PC-9 (cell line): ENCODE measurements at regions of chr17 and their contacts with region 1.

Region 1: DNA sequence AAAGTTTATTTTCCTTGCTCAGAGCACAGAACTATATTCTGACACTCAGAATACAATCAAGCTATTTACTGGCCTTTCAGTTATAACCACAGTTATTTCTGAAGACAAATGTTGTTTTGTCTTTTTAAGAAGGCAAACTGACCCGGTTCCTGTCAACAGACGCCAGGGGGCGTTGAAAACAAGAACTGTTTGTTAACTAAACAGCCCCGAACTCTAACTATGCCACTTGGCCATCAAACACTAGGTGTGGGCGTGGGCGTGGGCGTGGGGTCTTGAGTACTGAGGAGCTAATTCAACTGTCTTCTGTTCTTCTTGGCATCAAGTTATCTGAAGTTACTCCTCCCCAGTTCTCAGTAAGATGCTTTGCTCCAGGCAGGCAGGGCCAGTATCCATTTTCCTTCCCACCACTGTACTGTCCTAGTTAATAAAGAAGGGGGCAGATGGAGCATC is 63.2 kb upstream of the MTMR4 start:
- DNase-seq: peak; percentile 24 to 44
- H3K4me3 ChIP-seq: no peak overlapping the region
- H3K27ac ChIP-seq: no peak overlapping the region
- H3K4me1 ChIP-seq: peaks cover 15% of the 10 kb centered on the region
- H3K27me3 ChIP-seq: no peaks in the 10 kb centered on the region
- CTCF ChIP-seq: peak; percentile 83

Region 2: DNA sequence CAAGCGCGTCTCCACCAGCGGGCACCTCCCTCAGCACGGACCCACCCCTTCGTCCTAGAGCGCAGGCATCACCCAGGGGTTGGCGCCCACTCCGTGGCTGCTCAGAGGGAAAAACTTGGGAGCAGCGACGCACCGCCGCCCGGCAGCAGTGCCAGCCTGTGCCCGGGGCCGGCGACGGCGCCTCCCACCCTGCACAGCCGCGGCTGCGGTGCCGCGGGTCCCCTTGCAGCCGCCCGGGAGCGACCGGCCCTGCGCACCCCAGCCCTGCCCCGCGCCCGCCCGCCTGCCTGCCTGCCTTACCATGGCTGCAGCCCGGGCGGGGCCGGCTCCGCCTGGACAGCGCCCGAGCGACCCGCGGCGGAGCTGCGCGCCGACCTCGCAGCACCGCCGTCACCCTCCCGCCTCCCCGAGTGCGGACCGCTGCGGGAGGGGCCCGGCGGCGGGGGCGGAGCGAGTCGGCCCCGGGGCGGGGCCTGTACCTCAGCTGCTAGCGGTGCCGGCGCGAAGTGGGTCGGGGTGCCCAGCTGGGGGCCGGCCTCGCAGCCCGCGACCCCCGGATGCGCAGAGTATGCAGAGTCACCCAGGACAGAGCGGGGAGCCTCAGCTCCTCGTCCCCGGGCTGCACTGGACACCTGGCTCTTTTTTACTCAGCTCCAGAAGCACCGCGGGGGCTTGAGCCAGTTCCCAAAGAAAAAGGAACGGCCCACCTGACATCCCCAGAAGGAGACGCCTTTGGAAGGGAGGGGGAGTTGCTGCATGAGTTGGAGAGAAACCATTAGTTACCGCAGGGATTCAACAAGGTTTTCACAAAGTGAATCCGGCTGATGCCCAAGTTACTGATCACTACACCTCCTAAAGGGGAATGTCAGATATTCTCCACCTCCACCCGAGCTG is 45.8 kb before region 1 on chr17:
- CTCF ChIA-PET with region 1: no interaction called
- POLR2A ChIA-PET with region 1: no interaction called
- intact Hi-C with region 1: no loop called
- DNase-seq: peak in 1 of 2 experiments; percentile 55
- H3K4me3 ChIP-seq: peak overlapping the region; percentile 42; the same call in 1 of the 2 replicates
- H3K27ac ChIP-seq: no peak overlapping the region
- H3K4me1 ChIP-seq: peaks cover 15% of the 10 kb centered on the region
- H3K27me3 ChIP-seq: peaks cover 21% of the 10 kb centered on the region
- CTCF ChIP-seq: no peak

Region 3: DNA sequence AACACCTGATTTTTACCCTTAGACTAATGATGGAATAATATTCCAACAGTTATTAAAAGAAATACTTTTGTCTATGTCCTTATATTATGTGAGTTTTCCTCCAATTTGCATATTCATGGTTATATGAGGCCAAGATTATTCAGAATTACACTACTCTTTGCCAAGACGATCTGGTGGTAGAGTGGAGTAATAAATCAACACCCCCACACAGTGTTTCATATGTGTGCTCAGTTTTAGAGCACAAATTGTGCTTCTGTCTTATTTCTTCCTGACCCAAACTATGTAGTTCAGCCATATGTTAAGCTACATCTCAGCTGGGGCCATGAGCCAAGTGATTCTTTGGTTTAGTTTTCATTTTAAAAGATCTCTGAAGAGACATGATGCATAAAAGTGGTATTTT is 151.1 kb after region 1 on chr17:
- CTCF ChIA-PET with region 1: no interaction called
- POLR2A ChIA-PET with region 1: interaction called, 11 read pairs
- intact Hi-C with region 1: no loop called
- DNase-seq: no peak
- H3K4me3 ChIP-seq: no peak overlapping the region
- H3K27ac ChIP-seq: no peak overlapping the region
- H3K4me1 ChIP-seq: no peaks in the 10 kb centered on the region
- H3K27me3 ChIP-seq: no peaks in the 10 kb centered on the region
- CTCF ChIP-seq: no peak